ENCODE measurements at regions of chr7 and their contacts with region 1.

Region 1: GRCh38 chr7:138738551-138739335 is 37.6 kb upstream of the SVOPL start:
- DNase-seq: peak; percentile 85 to 97 (median 88)
- H3K4me3 ChIP-seq: peak overlapping the region in 1 of 4 donors; percentile 40
- H3K27ac ChIP-seq: peak overlapping the region in 1 of 5 donors; percentile 2
- H3K4me1 ChIP-seq: no peaks in the 10 kb centered on the region
- H3K27me3 ChIP-seq: no peaks in the 10 kb centered on the region
- CTCF ChIP-seq: peak; percentile 90 to 95 (median 93)
- POLR2A ChIP-seq: no peak

Region 2: GRCh38 chr7:138161600-138162081 is 577.1 kb before region 1 on chr7:
- intact Hi-C with region 1: loop called in 1 of 2 experiments (anchors 5 kb)
- DNase-seq: peak; percentile 90 to 97 (median 93)
- H3K4me3 ChIP-seq: no peak overlapping the region
- H3K27ac ChIP-seq: no peak overlapping the region
- H3K4me1 ChIP-seq: peaks cover 0 to 9% of the 10 kb centered on the region in 2 donors
- H3K27me3 ChIP-seq: no peaks in the 10 kb centered on the region
- CTCF ChIP-seq: peak; percentile 38 to 91 (median 86)
- POLR2A ChIP-seq: no peak

Region 3: DNA sequence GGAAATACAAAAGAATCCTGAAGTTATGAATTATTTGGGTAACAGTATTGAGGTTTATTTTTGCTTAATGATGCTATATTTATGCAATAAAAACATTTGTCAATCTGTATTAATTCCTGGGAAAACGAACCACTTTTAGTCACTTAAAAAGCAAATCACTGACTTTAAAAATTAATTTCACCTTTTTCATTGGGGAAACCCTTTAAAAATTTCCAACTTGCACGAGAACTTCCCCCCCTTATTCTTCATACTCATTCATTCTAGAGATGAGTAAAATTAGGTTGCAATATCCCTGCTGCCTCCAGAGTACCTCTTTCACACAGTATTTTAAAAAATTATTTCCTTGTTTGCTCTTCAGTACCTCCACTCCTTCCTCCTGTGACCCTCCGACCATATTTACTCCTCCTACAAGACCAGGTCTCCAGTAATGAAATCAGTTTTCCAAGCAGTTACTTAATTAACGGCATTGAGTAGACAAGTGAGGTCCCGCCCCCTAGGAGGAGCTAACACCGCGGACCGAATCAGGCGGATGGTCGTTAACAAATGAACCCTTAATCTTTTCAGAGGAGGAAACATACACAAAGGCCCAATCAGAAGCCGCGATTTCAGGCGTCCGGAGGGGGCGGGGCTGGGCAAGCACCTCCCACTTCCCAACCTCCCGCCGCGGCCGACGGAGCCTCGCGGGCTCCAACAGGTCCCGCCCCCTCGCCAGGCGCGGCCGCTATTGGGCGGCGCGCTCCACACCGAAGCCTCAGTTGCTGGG is 279.1 kb before region 1 on chr7:
- intact Hi-C with region 1: loop called in 1 of 2 experiments (anchors 10 kb)
- DNase-seq: peak in 6 of 7 donors; percentile 97 to 99 (median 98)
- H3K4me3 ChIP-seq: peak overlapping the region in 1 of 4 donors; percentile 99
- H3K27ac ChIP-seq: peak overlapping the region in 3 of 5 donors; percentile 17 to 96 (median 45)
- H3K4me1 ChIP-seq: peaks cover under 1 to 16% of the 10 kb centered on the region in 2 donors
- H3K27me3 ChIP-seq: no peaks in the 10 kb centered on the region
- CTCF ChIP-seq: peak; percentile 29 to 85 (median 69)
- POLR2A ChIP-seq: no peak

Measured in adrenal gland (tissue), 19 donors.